Natural killer cell (primary cell): ENCODE measurements at regions of chr1 and their contacts with region 1.

Region 1: GRCh38 chr1:42766741-42767509 is at the starts of genes C1orf50 and P3H1:
- DNase-seq: peak; percentile 99 to 100
- ATAC-seq: peak; percentile 92 to 98 (median 92)
- H3K4me3 ChIP-seq: peak within 1 kb of the TSS; percentile 78
- H3K4me3 Mint-ChIP-seq: no peak within 1 kb of the TSS
- H3K27ac ChIP-seq: peak within 1 kb of the TSS; percentile 81
- H3K27ac Mint-ChIP-seq: no peak within 1 kb of the TSS
- H3K4me1 ChIP-seq: peaks cover 18% of the 10 kb centered on the region
- H3K4me1 Mint-ChIP-seq: peaks cover 10 to 28% of the 10 kb centered on the region in 2 donors
- H3K27me3 ChIP-seq: no peaks in the 10 kb centered on the region
- H3K27me3 Mint-ChIP-seq: no peaks in the 10 kb centered on the region
- CTCF ChIP-seq: no peak
- total RNA-seq, gene C1orf50: 10.1 to 17.1 (median 12.7) TPM
- total RNA-seq, gene P3H1: 29.6 to 40.4 (median 37.9) TPM

Region 2: GRCh38 chr1:42456010-42456758 is 310.7 kb before region 1 on chr1 and contains the starts of genes PPCS and ZMYND12:
- intact Hi-C with region 1: loop called (anchors 2 kb)
- DNase-seq: peak; percentile 89 to 97
- ATAC-seq: peak; percentile 87 to 96 (median 87)
- H3K4me3 ChIP-seq: peak within 1 kb of the TSS; percentile 89
- H3K4me3 Mint-ChIP-seq: peak within 1 kb of the TSS; percentile 94
- H3K27ac ChIP-seq: peak within 1 kb of the TSS; percentile 89
- H3K27ac Mint-ChIP-seq: peak within 1 kb of the TSS; percentile 87 to 95
- H3K4me1 ChIP-seq: peaks cover 23% of the 10 kb centered on the region
- H3K4me1 Mint-ChIP-seq: peaks cover 26 to 33% of the 10 kb centered on the region in 2 donors
- H3K27me3 ChIP-seq: peaks cover 3% of the 10 kb centered on the region
- H3K27me3 Mint-ChIP-seq: peaks cover 0 to 4% of the 10 kb centered on the region in 2 donors
- CTCF ChIP-seq: no peak
- total RNA-seq, gene PPCS: 44.2 to 54.5 (median 50.2) TPM
- total RNA-seq, gene ZMYND12: 0.47 to 1.1 (median 0.97) TPM

Region 3: GRCh38 chr1:42681741-42682483 is 85.0 kb before region 1 on chr1 and contains the start of gene YBX1:
- intact Hi-C with region 1: loop called (anchors 5 kb)
- DNase-seq: peak; percentile 96 to 97
- ATAC-seq: peak; percentile 88 to 96 (median 91)
- H3K4me3 ChIP-seq: peak within 1 kb of the TSS; percentile 79
- H3K4me3 Mint-ChIP-seq: peak within 1 kb of the TSS; percentile 100
- H3K27ac ChIP-seq: peak within 1 kb of the TSS; percentile 88
- H3K27ac Mint-ChIP-seq: peak within 1 kb of the TSS; percentile 93 to 98
- H3K4me1 ChIP-seq: peaks cover 16% of the 10 kb centered on the region
- H3K4me1 Mint-ChIP-seq: peaks cover 46 to 51% of the 10 kb centered on the region in 2 donors
- H3K27me3 ChIP-seq: no peaks in the 10 kb centered on the region
- H3K27me3 Mint-ChIP-seq: no peaks in the 10 kb centered on the region
- CTCF ChIP-seq: no peak
- total RNA-seq, gene YBX1: 239 to 305 (median 279) TPM

Region 4: GRCh38 chr1:42816585-42817434 is 49.9 kb after region 1 on chr1 and contains the starts of genes ERMAP and SVBP:
- intact Hi-C with region 1: loop called (anchors 1 kb)
- DNase-seq: peak; percentile 92 to 96
- ATAC-seq: peak; percentile 86 to 96 (median 90)
- H3K4me3 ChIP-seq: peak within 1 kb of the TSS; percentile 84
- H3K4me3 Mint-ChIP-seq: peak within 1 kb of the TSS; percentile 80
- H3K27ac ChIP-seq: peak within 1 kb of the TSS; percentile 83
- H3K27ac Mint-ChIP-seq: peak within 1 kb of the TSS; percentile 80 to 84
- H3K4me1 ChIP-seq: peaks cover 10% of the 10 kb centered on the region
- H3K4me1 Mint-ChIP-seq: peaks cover 19 to 31% of the 10 kb centered on the region in 2 donors
- H3K27me3 ChIP-seq: no peaks in the 10 kb centered on the region
- H3K27me3 Mint-ChIP-seq: no peaks in the 10 kb centered on the region
- CTCF ChIP-seq: no peak
- total RNA-seq, gene ERMAP: 7.0 to 7.5 (median 7.5) TPM
- total RNA-seq, gene SVBP: 13.8 to 16.1 (median 15.2) TPM

Region 5: GRCh38 chr1:42846257-42847110 is 79.6 kb after region 1 on chr1 and contains the start of gene ZNF691:
- intact Hi-C with region 1: loop called (anchors 1 kb)
- DNase-seq: peak; percentile 71 to 95
- ATAC-seq: peak; percentile 97 to 99 (median 98)
- H3K4me3 ChIP-seq: peak within 1 kb of the TSS; percentile 72
- H3K4me3 Mint-ChIP-seq: peak within 1 kb of the TSS; percentile 92
- H3K27ac ChIP-seq: peak within 1 kb of the TSS; percentile 16
- H3K27ac Mint-ChIP-seq: peak within 1 kb of the TSS; percentile 52 to 91
- H3K4me1 ChIP-seq: peaks cover 14% of the 10 kb centered on the region
- H3K4me1 Mint-ChIP-seq: peaks cover 17 to 32% of the 10 kb centered on the region in 2 donors
- H3K27me3 ChIP-seq: no peaks in the 10 kb centered on the region
- H3K27me3 Mint-ChIP-seq: no peaks in the 10 kb centered on the region
- CTCF ChIP-seq: no peak
- total RNA-seq, gene ZNF691: 2.8 to 5.7 (median 5.2) TPM

Region 6: GRCh38 chr1:43171876-43172526 is 405.1 kb after region 1 on chr1 and contains the starts of genes CFAP57 and EBNA1BP2:
- intact Hi-C with region 1: loop called (anchors 2 kb)
- DNase-seq: peak; percentile 86 to 97
- ATAC-seq: peak; percentile 81 to 85 (median 85)
- H3K4me3 ChIP-seq: peak within 1 kb of the TSS; percentile 86
- H3K4me3 Mint-ChIP-seq: peak within 1 kb of the TSS; percentile 99
- H3K27ac ChIP-seq: peak within 1 kb of the TSS; percentile 60
- H3K27ac Mint-ChIP-seq: peak within 1 kb of the TSS; percentile 88 to 95
- H3K4me1 ChIP-seq: peaks cover 13% of the 10 kb centered on the region
- H3K4me1 Mint-ChIP-seq: peaks cover 19 to 23% of the 10 kb centered on the region in 2 donors
- H3K27me3 ChIP-seq: peaks cover 2% of the 10 kb centered on the region
- H3K27me3 Mint-ChIP-seq: peaks cover 15 to 16% of the 10 kb centered on the region in 2 donors
- CTCF ChIP-seq: no peak
- total RNA-seq, gene CFAP57: 0.19 TPM in 1 of 3 donors, not detected in the others
- total RNA-seq, gene EBNA1BP2: 21.2 to 28.5 (median 23.6) TPM